Breast epithelium (tissue), 4 donors: ENCODE measurements at regions of chr19 and their contacts with region 1.

Region 1: DNA sequence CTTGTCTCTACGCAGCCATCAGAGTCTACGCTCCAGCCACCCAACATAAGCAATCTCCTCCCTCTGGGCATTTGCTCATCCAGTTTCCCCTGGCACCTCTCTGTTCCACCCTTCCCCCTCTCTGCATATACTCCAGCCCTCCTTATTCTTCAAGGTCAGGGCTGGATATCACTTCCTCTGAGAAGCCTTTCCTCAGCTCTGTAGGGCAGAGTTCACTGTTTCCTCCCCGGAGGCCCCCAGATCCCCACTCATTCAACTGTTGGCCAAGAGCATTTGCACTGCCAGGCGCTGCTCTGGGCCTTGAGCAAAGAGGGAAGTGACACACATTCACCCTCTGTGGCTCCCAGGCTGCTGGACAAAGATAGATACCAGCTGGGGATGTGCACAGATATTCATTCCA is 3.3 kb downstream of the FCGRT start:
- DNase-seq: no peak
- H3K4me3 ChIP-seq: no peak overlapping the region
- H3K27ac ChIP-seq: no peak overlapping the region
- H3K4me1 ChIP-seq: no peaks in the 10 kb centered on the region
- H3K27me3 ChIP-seq: no peaks in the 10 kb centered on the region
- CTCF ChIP-seq: no peak
- POLR2A ChIP-seq: no peak

Region 2: DNA sequence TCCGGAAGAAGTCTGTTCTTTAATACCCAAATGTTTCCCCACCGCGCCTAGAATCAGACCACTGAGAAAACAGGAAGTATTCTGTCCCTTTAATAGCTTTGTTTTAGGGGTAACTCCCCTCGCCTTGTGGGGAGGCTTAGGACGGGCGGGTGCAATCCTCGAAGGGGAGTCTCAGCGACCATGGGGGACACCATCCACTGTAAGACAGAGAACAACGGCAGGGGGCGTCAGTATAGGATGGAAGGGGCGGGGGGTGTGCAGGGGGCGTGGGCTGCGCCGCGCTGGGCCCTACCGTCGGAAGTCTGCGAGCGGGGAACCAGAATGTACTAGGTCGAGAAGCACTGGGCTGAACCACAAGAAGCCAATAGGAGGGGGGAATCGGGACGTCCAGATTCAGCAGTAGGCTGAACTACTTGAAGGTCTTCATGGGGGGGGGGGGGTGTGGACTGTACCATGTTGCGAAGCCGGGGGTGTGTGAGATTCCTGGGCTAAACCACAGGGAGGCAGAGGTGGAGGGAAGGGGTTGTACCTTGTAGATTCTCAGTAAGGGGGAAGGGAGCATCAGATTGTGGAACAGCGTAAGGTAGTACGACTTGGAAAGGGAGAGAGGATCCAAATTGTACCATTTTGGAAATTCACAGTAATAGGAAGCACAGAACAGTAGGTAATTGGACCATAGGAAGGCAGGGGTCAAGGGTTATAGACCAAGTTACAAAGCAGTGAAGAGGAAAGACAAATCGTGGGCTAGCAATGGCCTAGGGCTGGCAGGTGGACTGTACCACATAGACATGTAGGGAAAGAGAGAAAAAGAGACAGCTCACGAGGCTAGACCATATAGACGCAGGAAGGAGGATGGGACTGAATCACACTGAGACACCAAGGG is 877.6 kb before region 1 on chr19:
- intact Hi-C with region 1: no loop called
- DNase-seq: peak; percentile 83 to 91
- H3K4me3 ChIP-seq: peak overlapping the region; percentile 63 to 88 (median 77)
- H3K27ac ChIP-seq: peak overlapping the region; percentile 99
- H3K4me1 ChIP-seq: peaks cover 0 to 7% of the 10 kb centered on the region in 2 donors
- H3K27me3 ChIP-seq: no peaks in the 10 kb centered on the region
- CTCF ChIP-seq: peak in 2 of 3 donors; percentile 34 to 40
- POLR2A ChIP-seq: peak; percentile 28

Region 3: GRCh38 chr19:49553451-49554271 is 37.9 kb after region 1 on chr19:
- intact Hi-C with region 1: loop called (anchors 5 kb)
- DNase-seq: no peak
- H3K4me3 ChIP-seq: no peak overlapping the region
- H3K27ac ChIP-seq: peak overlapping the region; percentile 29 to 50
- H3K4me1 ChIP-seq: no peaks in the 10 kb centered on the region
- H3K27me3 ChIP-seq: no peaks in the 10 kb centered on the region
- CTCF ChIP-seq: no peak
- POLR2A ChIP-seq: no peak